Heart right ventricle (tissue), 16 donors: ENCODE measurements at regions of chr10 and their contacts with region 1.

Region 1: DNA sequence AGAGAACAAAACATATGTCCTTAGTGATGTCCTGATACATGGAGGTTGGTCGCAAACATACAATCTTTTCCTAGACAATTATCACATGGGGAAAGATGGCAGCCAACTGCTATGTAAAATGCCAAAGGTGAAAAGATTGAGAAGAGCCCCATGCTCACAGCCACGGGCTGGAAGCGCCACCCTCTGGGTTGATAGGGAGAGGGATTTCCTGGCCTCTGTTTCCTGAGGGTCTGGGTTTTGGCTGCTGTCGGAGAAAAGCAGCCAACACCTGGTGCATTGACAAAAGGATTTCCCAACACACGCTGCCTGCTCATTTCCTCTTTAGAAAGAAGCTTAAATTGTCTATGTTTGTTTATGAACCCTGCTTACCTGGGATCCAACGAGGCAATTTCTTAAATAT is 43.8 kb downstream of the ITIH5 start:
- DNase-seq: no peak
- ATAC-seq: peak in 5 of 8 donors; percentile 46 to 71 (median 50)
- H3K4me3 ChIP-seq: no peak overlapping the region
- H3K27ac ChIP-seq: no peak overlapping the region
- H3K4me1 ChIP-seq: peaks cover 4 to 30% (median 8%) of the 10 kb centered on the region in 9 donors
- H3K27me3 ChIP-seq: no peaks in the 10 kb centered on the region
- CTCF ChIP-seq: peak in 8 of 9 donors; percentile 14 to 59 (median 45)

Region 2: DNA sequence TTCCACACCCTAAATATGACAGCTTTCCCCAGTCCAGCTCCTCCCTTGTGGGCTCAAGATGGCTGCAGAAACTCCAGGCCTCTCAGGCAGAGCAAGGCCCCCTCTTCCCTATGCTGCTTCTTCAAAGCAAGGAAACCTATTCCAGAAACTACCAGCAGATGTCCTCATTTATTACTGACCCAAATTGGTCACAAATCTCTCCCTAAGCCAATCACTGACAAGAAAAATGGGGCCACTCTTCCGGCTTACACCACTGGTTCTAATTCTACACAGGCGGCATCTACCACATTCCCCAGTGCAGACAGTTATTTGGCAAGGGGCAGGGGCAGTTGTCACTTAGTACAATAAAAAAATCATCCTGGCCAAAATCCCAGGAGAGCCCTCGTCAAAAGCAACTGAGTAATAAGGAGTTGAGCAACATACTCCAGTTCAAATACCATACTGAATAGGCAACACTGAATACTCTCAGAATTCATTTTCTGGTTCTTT is 362.5 kb before region 1 on chr10:
- intact Hi-C with region 1: no loop called
- DNase-seq: peak in 1 of 2 donors; percentile 82
- ATAC-seq: peak; percentile 91 to 96 (median 94)
- H3K4me3 ChIP-seq: no peak overlapping the region
- H3K27ac ChIP-seq: peak overlapping the region in 8 of 10 donors; percentile 54 to 73 (median 64)
- H3K4me1 ChIP-seq: peaks cover 7 to 67% (median 28%) of the 10 kb centered on the region in 9 donors
- H3K27me3 ChIP-seq: no peaks in the 10 kb centered on the region
- CTCF ChIP-seq: peak; percentile 64 to 89 (median 81)

Region 3: DNA sequence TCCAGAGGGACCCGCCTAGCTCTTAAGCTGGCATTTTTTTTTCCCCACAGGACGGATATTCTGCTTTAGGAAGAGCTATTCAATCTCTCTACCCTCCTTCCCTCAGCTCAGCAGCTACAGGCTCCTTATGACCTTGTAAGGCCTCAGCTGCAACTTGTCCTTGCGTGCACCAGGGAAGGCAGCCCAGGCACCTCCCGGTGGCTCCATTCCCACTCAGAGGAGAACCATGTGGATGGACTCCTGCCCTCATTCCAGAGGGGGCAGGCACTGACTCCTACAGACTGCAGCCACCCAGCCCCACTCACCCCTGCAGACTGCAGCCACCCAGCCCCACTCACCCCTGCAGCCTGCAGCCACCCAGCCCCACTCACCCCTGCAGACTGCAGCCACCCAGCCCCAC is 29.9 kb before region 1 on chr10:
- intact Hi-C with region 1: loop called in 1 of 10 experiments (anchors 1 kb)
- DNase-seq: peak; percentile 59 to 72
- ATAC-seq: peak; percentile 91 to 98 (median 96)
- H3K4me3 ChIP-seq: no peak overlapping the region
- H3K27ac ChIP-seq: peak overlapping the region in 8 of 10 donors; percentile 35 to 72 (median 54)
- H3K4me1 ChIP-seq: peaks cover 0 to 9% (median 5%) of the 10 kb centered on the region in 9 donors
- H3K27me3 ChIP-seq: no peaks in the 10 kb centered on the region
- CTCF ChIP-seq: no peak

Region 4: DNA sequence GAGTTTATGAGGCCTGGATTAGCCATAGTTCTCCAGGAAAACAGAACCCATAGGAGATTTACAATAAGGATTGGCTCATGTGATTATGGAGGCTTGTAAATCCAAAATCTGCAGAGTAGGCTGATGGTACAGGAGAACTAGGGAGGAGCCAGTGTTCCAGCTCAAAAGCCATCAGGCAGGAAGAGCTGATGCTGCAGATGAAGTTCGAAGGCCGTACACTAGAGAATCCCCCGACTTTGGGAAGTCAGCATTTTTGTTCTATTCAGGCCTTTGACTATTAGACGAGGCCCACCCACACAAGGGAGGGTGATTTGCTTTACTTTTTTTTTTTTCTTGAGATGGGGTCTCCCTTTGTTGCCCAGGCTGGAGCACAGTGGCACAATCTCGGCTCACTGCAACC is 127.3 kb after region 1 on chr10:
- intact Hi-C with region 1: loop called in 1 of 10 experiments (anchors 5 kb)
- DNase-seq: no peak
- ATAC-seq: no peak
- H3K4me3 ChIP-seq: no peak overlapping the region
- H3K27ac ChIP-seq: no peak overlapping the region
- H3K4me1 ChIP-seq: no peaks in the 10 kb centered on the region
- H3K27me3 ChIP-seq: no peaks in the 10 kb centered on the region
- CTCF ChIP-seq: no peak